Activated CD4-positive, alpha-beta T cell treated with anti-CD3 and anti-CD28 coated beads, Interleukin-2, amount 10 ng/mL, durations not matched to agents 7 days and 5 days (primary cell): ENCODE measurements at regions of chr6 and their contacts with region 1.

Region 1: DNA sequence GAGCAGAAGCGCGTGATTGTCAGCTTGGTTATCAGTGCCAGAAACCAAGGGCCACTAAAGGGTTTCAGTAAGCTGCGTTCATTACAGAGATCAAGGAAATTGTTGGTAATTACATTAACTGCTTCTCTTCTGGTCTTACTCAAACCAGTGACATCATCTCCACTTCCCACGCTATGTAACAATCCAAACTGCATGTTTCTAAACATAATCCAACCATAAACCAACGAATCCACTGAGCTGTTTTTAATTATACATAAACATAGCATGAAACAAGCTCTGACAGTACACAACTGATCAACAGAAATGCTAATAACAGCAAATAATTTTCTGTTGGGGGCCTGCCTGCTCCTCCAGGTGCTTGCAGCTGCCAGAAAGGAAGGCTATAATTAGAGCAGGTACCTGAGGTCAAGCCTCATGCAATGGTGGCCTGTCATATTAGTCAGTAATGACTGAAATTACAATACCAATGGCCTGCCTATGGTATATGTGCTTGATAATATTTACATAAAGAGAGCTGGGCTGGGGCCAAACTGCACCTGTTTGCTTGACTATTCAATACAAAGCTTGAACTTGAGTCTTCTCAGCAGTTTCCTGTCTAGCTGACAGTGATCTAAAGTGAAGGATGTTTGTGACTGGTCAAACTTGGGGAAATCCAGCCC is 40.1 kb downstream of the ILRUN start:
- DNase-seq: peak; percentile 29
- H3K4me3 Mint-ChIP-seq: peak overlapping the region; percentile 66
- H3K27ac Mint-ChIP-seq: peak overlapping the region; percentile 93
- H3K4me1 Mint-ChIP-seq: peaks cover 57% of the 10 kb centered on the region
- H3K27me3 Mint-ChIP-seq: no peaks in the 10 kb centered on the region

Region 2: DNA sequence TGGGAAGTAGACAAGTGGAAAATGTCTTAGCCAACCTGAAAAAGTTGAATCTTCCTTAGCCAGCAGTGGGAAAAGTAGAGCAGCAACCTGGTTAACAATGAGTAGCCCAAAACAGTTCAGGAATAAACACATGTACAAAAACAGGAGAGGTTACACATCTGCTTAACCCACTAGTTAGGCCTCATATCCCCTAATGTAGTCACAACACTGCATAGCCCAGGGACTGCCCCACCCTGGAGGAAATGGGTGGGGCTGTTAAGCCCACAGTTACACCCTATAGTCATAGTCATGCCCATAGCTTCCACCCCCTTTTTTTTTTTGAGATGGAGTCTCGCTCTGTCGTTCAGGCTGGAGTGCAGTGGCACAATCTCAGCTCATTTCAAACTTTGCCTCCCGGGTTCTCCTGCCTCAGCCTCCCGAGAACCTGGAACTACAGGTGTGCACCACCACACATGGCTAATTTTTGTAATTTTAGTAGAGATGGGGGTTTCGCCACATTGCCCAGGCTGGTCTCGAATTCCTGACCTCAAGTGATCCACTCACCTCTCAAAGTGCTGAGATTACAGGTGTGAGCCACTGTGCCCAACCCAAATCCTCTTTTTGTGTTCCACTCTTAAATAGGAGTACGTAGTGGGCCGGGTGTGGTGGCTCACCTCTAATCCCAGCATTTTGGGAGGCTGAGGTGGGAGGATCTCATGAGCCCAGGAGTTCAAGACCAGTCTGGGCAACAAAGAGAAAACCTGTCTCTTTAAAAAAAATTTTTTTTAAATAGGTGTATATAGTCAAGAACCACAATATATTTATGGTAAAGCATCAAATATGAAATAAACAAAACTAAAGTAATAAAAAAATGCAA is 15.5 kb after region 1 on chr6:
- CTCF ChIA-PET with region 1: interaction called, 10 read pairs
- POLR2A ChIA-PET with region 1: interaction called, 3 read pairs
- DNase-seq: peak; percentile 85
- H3K4me3 Mint-ChIP-seq: peak overlapping the region; percentile 69
- H3K27ac Mint-ChIP-seq: peak overlapping the region; percentile 98
- H3K4me1 Mint-ChIP-seq: peaks cover 64% of the 10 kb centered on the region
- H3K27me3 Mint-ChIP-seq: no peaks in the 10 kb centered on the region

Region 3: DNA sequence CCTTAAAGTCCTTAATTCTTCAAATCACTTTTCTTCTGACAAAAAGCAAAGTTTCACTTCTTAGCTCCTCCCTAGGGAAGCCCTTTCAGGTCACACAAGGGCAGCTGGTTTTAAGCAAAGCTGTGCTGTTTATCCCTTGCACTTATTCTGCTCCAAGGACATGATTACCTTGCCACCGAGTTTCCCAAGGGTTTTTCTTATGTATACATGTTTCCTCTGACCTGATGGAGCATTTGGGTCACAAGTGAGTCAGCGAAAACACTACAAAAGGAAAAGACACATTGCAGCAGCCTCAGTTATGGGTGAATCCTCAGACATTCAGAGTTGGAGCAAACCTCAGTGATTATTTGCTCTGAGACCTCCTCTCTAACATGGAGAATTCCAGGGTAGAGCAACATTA is 66.7 kb after region 1 on chr6:
- CTCF ChIA-PET with region 1: no interaction called
- POLR2A ChIA-PET with region 1: no interaction called
- DNase-seq: no peak
- H3K4me3 Mint-ChIP-seq: no peak overlapping the region
- H3K27ac Mint-ChIP-seq: no peak overlapping the region
- H3K4me1 Mint-ChIP-seq: no peaks in the 10 kb centered on the region
- H3K27me3 Mint-ChIP-seq: no peaks in the 10 kb centered on the region

Region 4: GRCh38 chr6:34851361-34851760 is 194.9 kb after region 1 on chr6:
- CTCF ChIA-PET with region 1: no interaction called
- POLR2A ChIA-PET with region 1: no interaction called
- DNase-seq: no peak
- H3K4me3 Mint-ChIP-seq: no peak overlapping the region
- H3K27ac Mint-ChIP-seq: no peak overlapping the region
- H3K4me1 Mint-ChIP-seq: no peaks in the 10 kb centered on the region
- H3K27me3 Mint-ChIP-seq: no peaks in the 10 kb centered on the region